ENCODE measurements at regions of chr7 and their contacts with region 1.

Region 1: GRCh38 chr7:73606801-73607691 is 17.3 kb downstream of the MLXIPL start:
- DNase-seq: peak; percentile 90
- CTCF ChIP-seq: peak; percentile 92

Region 2: DNA sequence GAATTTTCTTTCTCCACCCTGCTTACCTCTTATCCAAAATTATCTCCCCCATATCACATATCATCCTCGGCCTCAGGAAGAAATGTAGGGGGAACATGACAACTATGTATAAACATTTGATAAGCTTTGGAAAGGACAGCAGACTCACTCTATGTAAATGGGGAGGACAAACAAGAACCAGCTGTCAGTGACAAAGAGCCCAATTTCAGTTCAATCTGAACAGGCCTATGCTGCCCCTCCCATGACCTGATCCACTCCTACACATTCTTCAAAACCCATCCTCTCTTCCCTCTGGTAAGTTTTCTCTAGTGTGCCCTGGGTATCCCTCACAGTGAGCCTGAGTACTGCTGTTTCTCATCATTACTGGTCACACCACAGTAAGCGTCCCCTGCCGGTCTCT is 152.6 kb before region 1 on chr7:
- CTCF ChIA-PET with region 1: no interaction called
- POLR2A ChIA-PET with region 1: no interaction called
- DNase-seq: no peak
- CTCF ChIP-seq: no peak

Region 3: DNA sequence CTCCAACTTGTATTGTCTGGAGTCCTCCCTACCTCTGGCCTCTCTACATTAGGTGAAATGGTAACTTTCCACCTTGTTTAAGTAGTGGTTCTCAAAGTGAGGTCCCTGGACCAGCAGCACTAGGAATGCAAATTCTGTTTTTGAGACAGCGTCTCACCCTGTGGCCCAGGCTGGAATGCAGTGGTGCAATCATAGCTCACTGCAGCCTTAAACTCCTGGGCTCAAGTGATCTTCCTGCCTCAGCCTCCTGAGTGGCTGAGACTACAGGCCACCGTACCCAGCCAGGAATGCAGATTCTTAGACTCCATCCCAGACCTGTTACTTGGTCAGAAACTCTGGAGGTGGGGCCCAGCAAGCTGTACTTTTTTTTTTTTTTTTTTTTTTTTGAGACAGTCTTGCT is 21.9 kb before region 1 on chr7:
- CTCF ChIA-PET with region 1: interaction called, 55 read pairs
- POLR2A ChIA-PET with region 1: no interaction called
- DNase-seq: no peak
- CTCF ChIP-seq: no peak

Region 4: DNA sequence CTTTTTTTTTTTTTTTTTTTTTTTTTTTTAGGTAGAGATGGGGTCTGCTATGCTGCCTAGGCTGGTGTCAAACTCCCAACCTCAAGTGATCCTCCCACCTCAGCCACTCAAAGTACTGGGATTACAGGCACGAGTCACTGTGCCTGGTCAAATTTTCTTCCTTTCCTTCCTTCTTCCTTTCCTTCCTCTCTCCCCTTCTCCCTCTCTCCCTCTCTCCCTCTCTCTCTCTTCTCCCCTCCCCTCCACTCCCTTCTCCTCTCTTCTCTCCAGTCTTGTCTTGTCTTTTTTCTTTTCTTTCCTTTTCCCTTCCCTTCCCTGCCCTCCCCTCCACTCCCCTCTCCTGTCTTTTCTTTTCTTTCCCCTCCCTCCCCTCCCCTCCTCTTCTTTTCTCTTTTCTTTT is 24.5 kb after region 1 on chr7:
- CTCF ChIA-PET with region 1: interaction called, 11 read pairs
- POLR2A ChIA-PET with region 1: no interaction called
- DNase-seq: no peak
- CTCF ChIP-seq: no peak

Region 5: DNA sequence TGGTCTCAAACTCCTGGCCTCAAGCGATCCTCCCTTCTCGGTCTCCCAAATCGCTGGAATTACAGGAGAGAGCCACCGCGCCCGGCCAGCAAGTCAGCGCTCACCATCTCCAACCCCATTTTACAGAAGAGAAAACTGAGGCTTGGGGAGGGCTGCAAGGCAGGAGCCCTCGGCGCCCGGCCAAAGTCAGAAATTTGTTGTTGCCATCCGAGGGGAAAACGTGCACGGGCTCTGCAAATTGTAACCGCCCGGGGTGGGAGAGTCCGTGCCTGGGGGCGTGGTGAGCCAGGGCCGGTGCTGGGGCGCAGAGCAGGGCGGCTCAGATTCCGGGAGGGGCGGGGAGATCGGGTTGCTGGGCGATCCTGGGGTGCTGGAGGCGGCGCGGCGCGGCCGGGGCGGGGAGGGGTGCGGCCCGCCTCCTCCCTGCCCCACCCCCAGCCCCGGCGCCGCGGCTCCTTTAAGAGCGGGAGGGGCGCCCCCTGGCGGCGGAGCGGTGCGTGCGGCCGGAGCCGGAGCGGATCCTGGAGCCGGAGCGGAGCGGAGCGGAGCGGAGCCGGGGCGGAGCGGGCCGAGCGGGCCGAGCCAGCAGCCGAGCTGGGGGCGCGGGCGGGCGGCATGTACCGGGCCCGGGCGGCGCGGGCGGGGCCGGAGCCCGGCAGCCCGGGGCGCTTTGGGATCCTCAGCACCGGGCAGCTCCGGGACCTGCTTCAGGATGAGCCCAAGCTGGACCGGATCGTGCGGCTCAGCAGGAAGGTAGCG is 60.5 kb after region 1 on chr7 and contains the start of gene VPS37D:
- CTCF ChIA-PET with region 1: interaction called, 13 read pairs
- POLR2A ChIA-PET with region 1: no interaction called
- DNase-seq: peak; percentile 98
- CTCF ChIP-seq: peak; percentile 97

Region 6: DNA sequence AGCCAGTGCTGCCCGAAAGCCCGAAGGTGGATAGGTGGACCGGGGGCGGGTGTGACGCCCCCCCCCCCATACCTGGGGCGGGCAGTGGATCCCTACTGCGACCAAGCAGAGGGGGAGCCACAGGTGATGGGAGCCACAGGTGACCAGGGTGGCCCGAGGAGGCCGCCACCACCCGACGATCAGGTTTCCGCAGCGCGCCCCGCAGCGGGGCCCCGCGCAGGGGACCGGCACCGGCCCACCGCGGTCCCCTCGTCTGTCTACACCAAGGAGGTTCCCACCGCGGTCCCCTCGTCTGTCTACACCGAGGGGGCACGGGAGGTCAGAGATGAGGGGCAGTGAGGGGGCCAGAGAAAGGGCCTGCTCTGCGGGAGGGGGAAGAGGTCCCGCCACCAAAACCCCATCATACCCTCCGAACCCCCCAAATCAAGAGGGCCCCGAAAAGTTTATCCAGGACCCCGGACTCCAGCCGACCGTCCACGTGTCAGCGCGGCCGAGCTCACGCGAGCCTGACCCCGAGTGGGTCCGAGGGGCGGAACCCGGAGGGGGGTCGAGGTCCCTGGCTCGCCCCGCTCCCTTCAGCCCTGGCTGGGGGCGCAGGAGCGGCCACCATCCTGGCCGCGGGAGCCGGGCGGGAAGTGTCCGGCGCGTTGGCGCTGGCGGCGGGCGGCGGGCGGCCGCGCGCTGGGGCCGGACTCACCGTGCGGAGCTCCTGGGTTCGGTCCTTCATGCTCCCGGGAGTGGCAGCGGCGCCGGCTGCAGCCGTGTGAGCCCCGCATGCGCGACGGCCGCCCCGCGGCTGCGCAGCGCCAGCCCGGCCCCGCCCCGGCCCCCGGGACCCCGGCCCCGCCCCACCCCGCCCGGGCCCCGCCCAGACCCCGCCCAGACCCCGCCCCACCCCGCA is 112.1 kb after region 1 on chr7 and contains the start of gene STX1A:
- CTCF ChIA-PET with region 1: interaction called, 93 read pairs
- POLR2A ChIA-PET with region 1: no interaction called
- DNase-seq: peak; percentile 95
- CTCF ChIP-seq: no peak

Region 7: GRCh38 chr7:73879977-73880681 is 273.1 kb after region 1 on chr7:
- CTCF ChIA-PET with region 1: no interaction called
- POLR2A ChIA-PET with region 1: no interaction called
- DNase-seq: no peak
- CTCF ChIP-seq: no peak

Measured in GM10248 (cell line).